ENCODE measurements at regions of chr14 and their contacts with region 1.

Region 1: DNA sequence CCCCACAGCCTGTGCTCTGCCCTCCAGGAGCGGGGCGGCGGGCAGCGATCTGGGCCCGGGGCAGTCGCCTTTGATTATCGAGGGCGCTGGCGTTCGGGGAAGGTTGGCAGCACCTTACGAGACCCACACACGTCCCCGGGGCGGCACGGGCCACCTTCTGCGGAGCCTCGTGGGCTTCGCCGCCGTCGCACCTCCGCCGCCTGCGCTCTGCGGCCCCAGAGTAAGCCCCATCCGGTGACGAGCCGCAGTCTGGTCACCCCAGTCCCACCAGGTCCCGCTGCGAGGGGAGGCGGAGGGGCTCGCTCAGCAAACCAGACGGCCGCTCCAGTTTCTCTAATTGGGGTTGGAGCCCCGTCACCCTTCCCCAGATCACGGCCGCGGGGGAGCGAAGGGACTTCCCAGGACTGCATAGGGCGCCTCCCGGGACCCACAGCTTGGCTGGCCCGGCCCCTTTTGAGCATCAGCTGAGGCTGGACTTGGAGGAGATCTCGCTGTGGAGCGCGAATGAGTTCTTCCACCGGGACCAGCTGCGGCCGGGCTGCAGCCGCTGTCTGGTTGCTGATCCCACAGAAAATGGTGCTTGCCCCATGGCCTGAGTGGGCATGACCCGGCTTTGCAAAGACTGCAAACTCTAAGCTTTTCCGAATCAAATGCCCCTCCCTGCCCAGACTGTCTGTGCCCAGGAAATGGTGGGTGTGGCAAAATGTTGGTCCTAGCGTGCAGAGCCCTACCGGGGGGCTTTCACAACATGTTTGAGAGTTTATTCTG is 560 bp downstream of the LGALS3 start:
- DNase-seq: peak; percentile 29
- ATAC-seq: peak; percentile 81
- H3K4me3 ChIP-seq: peak overlapping the region; percentile 69 to 78 (median 76)
- H3K27ac ChIP-seq: no peak overlapping the region
- H3K4me1 ChIP-seq: peaks cover 32% of the 10 kb centered on the region
- H3K27me3 ChIP-seq: peaks cover 2 to 14% of the 10 kb centered on the region in 2 experiments; a peak in 3 of 5 replicates
- CTCF ChIP-seq: no peak
- EP300 ChIP-seq: no peak
- POLR2A ChIP-seq: peak in 1 of 2 experiments; percentile 27; a peak in 1 of 4 replicates
- RAD21 ChIP-seq: no peak

Region 2: GRCh38 chr14:55051426-55052268 is 78.0 kb before region 1 on chr14 and contains the start of gene MAPK1IP1L:
- CTCF ChIA-PET with region 1: no interaction called
- POLR2A ChIA-PET with region 1: no interaction called
- in situ Hi-C with region 1: no loop called
- intact Hi-C with region 1: no loop called
- DNase-seq: peak; percentile 82
- ATAC-seq: peak; percentile 96
- H3K4me3 ChIP-seq: peak within 1 kb of the TSS; percentile 76 to 99 (median 94)
- H3K27ac ChIP-seq: peak within 1 kb of the TSS; percentile 99
- H3K4me1 ChIP-seq: peaks cover 46% of the 10 kb centered on the region
- H3K27me3 ChIP-seq: no peaks in the 10 kb centered on the region; a peak in 1 of 5 replicates
- CTCF ChIP-seq: peak; percentile 94
- EP300 ChIP-seq: peak; percentile 16 to 81; a peak in 3 of 4 replicates
- POLR2A ChIP-seq: peak; percentile 96 to 98
- RAD21 ChIP-seq: peak; percentile 88
- total RNA-seq, gene MAPK1IP1L: 27.8 and 34.7 TPM in 2 replicates

Region 3: GRCh38 chr14:55094321-55095157 is 35.1 kb before region 1 on chr14:
- CTCF ChIA-PET with region 1: no interaction called
- POLR2A ChIA-PET with region 1: no interaction called
- in situ Hi-C with region 1: no loop called
- intact Hi-C with region 1: loop called (anchors 1 kb)
- DNase-seq: no peak
- ATAC-seq: no peak
- H3K4me3 ChIP-seq: no peak overlapping the region
- H3K27ac ChIP-seq: no peak overlapping the region
- H3K4me1 ChIP-seq: peaks cover 8% of the 10 kb centered on the region; the same call in 1 of the 2 replicates
- H3K27me3 ChIP-seq: no peaks in the 10 kb centered on the region
- CTCF ChIP-seq: no peak
- EP300 ChIP-seq: no peak
- POLR2A ChIP-seq: no peak
- RAD21 ChIP-seq: no peak

Region 4: DNA sequence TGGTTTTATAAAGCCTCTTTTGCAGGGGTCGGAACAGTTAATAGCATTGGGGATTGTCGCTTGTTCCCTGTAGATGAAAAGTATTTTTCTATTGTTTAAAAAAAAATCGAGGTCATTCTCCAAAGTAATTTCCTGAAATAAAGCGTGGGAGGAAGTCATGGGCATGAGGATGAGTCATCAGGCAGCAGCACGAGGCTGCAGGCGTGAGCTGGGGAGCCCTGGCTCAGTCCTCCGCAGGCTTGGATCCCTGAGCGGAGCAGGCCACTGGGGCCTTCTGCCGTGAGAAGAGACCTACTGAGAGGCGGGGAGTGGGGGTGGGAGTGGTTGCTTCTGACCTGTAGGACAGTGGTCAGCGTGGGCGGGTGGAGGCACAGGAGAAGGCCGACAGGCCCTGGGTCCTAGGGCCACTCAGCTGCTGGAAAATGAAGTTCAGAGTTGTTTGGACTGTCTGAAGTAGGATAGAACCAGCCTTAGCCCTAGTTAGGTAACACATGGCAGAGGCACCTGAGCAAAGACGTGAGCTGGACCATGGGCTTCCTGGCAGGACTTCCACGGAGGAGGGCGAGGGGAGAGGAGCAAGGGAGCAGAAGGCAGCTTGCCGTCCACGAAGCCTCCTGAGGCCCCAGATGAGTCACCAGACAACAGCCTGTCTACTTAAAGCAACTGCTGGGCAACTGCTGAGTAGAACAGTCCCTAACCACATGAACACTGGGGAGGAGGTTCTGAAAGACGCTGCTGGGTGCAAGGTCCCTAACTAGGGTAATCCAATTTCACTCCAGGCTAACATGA is 21.7 kb before region 1 on chr14:
- CTCF ChIA-PET with region 1: no interaction called
- POLR2A ChIA-PET with region 1: interaction called, 22 read pairs
- in situ Hi-C with region 1: no loop called
- intact Hi-C with region 1: loop called (anchors 2 kb)
- DNase-seq: peak; percentile 83
- ATAC-seq: peak; percentile 87
- H3K4me3 ChIP-seq: peak overlapping the region in 1 of 3 experiments; percentile 37; a peak in 2 of 6 replicates
- H3K27ac ChIP-seq: peak overlapping the region; percentile 85
- H3K4me1 ChIP-seq: peaks cover 58% of the 10 kb centered on the region
- H3K27me3 ChIP-seq: no peaks in the 10 kb centered on the region
- CTCF ChIP-seq: no peak
- EP300 ChIP-seq: peak in 1 of 2 experiments; percentile 38; a peak in 1 of 4 replicates
- POLR2A ChIP-seq: peak; percentile 64 to 79
- RAD21 ChIP-seq: peak; percentile 31; the same call in 1 of the 2 replicates

Region 5: DNA sequence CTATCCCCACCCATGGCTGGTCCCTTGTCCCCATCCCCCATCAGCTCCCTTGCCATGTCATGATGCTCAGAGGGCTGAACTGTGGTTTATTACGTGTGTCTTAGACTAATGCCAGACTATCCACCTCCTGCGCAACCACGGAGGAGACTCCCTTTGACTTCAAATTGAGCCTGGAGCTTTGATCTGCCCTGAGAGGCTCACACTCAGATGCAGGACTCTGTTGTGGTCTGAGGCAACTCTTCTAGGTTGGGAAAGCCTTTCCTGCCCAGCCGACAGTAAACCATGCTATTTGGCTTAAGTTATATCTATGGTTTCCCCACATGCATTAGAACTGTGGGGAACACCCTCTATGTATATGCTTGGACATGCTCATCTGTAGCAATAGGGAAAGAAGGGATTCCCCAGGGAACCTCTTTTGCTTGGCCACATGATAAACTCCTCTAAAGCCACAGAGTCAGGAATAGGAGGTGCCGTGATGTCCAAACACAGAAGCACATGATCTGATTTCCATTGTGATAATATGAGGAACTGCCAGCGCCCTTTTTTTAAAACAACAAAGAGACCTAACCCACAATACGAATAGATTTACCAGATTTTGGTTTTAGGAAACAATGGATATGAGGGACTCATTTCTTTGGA is 11.7 kb before region 1 on chr14:
- CTCF ChIA-PET with region 1: no interaction called
- POLR2A ChIA-PET with region 1: no interaction called
- in situ Hi-C with region 1: no loop called
- intact Hi-C with region 1: loop called (anchors 2 kb)
- DNase-seq: no peak
- ATAC-seq: no peak; the same call in 2 of the 3 replicates
- H3K4me3 ChIP-seq: no peak overlapping the region
- H3K27ac ChIP-seq: no peak overlapping the region
- H3K4me1 ChIP-seq: peaks cover 80% of the 10 kb centered on the region
- H3K27me3 ChIP-seq: no peaks in the 10 kb centered on the region
- CTCF ChIP-seq: no peak
- EP300 ChIP-seq: no peak
- POLR2A ChIP-seq: no peak
- RAD21 ChIP-seq: no peak